CD4-positive, alpha-beta memory T cell (primary cell): ENCODE measurements at regions of chr19 and their contacts with region 1.

Region 1: GRCh38 chr19:44113138-44113783 is at the start of gene ZNF225:
- DNase-seq: peak; percentile 80 to 85 (median 84)
- H3K4me3 ChIP-seq: peak within 1 kb of the TSS; percentile 92 to 96
- H3K4me3 Mint-ChIP-seq: peak within 1 kb of the TSS; percentile 96 to 100 (median 99)
- H3K27ac ChIP-seq: peak within 1 kb of the TSS; percentile 30
- H3K27ac Mint-ChIP-seq: peak within 1 kb of the TSS; percentile 75 to 98 (median 94)
- H3K4me1 ChIP-seq: peaks cover 19% of the 10 kb centered on the region
- H3K4me1 Mint-ChIP-seq: peaks cover 9 to 40% (median 23%) of the 10 kb centered on the region in 4 donors
- H3K27me3 ChIP-seq: no peaks in the 10 kb centered on the region
- H3K27me3 Mint-ChIP-seq: no peaks in the 10 kb centered on the region
- total RNA-seq, gene ZNF225: 10.7 to 13.9 TPM

Region 2: DNA sequence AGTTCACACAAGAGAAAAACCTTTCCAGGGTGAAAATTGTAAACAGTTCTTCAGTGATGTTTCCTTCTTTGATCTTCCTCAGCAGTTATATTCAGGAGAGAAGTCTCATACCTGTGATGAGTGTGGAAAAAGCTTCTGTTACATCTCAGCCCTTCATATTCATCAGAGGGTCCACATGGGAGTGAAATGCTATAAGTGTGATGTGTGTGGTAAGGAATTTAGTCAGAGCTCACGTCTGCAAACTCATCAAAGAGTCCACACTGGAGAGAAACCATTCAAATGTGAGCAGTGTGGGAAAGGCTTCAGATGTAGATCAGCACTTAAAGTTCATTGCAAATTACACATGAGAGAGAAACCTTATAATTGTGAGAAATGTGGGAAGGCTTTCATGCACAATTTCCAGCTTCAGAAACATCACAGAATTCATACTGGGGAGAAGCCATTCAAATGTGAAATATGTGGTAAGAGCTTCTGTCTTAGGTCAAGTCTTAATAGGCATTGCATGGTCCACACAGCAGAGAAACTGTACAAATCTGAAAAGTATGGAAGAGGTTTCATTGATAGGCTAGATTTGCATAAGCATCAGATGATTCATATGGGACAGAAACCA is 81.2 kb before region 1 on chr19:
- CTCF ChIA-PET with region 1: no interaction called
- POLR2A ChIA-PET with region 1: no interaction called
- intact Hi-C with region 1: no loop called
- DNase-seq: no peak
- H3K4me3 ChIP-seq: no peak overlapping the region
- H3K4me3 Mint-ChIP-seq: no peak overlapping the region
- H3K27ac ChIP-seq: no peak overlapping the region
- H3K27ac Mint-ChIP-seq: no peak overlapping the region
- H3K4me1 ChIP-seq: no peaks in the 10 kb centered on the region
- H3K4me1 Mint-ChIP-seq: peaks cover 0 to 12% (median 4%) of the 10 kb centered on the region in 4 donors
- H3K27me3 ChIP-seq: no peaks in the 10 kb centered on the region
- H3K27me3 Mint-ChIP-seq: no peaks in the 10 kb centered on the region

Region 3: DNA sequence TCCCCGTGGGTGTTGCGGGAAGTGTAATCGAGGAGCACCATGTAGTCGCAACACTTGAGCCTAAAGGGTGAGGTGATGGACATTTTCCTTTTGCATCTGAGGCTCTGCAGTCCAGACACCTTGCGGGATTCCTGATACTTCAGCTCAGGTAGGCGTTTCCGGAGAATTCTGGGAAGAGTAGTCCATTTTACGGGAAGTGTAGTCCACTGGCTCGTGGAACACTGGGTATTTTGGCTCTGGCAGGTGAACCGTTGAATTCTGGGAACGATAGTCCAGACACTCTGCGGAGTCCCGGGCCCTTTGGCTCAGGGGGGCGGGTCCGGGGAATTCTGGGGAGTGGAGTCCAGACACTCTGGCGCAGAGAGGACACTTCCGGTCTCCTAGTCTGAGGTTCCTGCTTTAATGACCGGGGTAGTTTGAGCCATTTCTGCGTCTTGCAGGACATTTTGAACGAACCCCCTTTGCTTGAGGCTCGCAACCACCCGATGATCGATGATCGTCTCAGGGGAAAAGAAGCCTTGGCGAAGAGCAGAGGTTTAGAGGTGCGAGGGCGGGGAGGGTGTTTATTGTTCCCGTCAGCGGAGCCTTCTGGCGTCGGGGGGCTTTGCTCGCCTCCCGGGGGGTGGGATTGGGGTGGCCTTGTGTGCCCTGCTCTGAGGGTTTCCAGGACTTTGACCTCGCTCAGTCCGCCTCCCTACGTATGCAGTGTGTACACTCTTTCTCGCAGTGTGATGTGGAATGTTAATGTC is 61.4 kb before region 1 on chr19 and contains the start of gene ZNF223:
- CTCF ChIA-PET with region 1: no interaction called
- POLR2A ChIA-PET with region 1: interaction called, 4 read pairs
- intact Hi-C with region 1: loop called (anchors 1 kb)
- DNase-seq: peak; percentile 40 to 51 (median 45)
- H3K4me3 ChIP-seq: peak within 1 kb of the TSS; percentile 61 to 76
- H3K4me3 Mint-ChIP-seq: peak within 1 kb of the TSS; percentile 86 to 97 (median 94)
- H3K27ac ChIP-seq: no peak within 1 kb of the TSS
- H3K27ac Mint-ChIP-seq: peak within 1 kb of the TSS; percentile 27 to 88 (median 84)
- H3K4me1 ChIP-seq: peaks cover 8% of the 10 kb centered on the region
- H3K4me1 Mint-ChIP-seq: peaks cover 18 to 28% (median 26%) of the 10 kb centered on the region in 4 donors
- H3K27me3 ChIP-seq: no peaks in the 10 kb centered on the region
- H3K27me3 Mint-ChIP-seq: peaks cover 3 to 4% of the 10 kb centered on the region in 2 donors
- total RNA-seq, gene ZNF223: 6.8 to 8.0 TPM

Region 4: DNA sequence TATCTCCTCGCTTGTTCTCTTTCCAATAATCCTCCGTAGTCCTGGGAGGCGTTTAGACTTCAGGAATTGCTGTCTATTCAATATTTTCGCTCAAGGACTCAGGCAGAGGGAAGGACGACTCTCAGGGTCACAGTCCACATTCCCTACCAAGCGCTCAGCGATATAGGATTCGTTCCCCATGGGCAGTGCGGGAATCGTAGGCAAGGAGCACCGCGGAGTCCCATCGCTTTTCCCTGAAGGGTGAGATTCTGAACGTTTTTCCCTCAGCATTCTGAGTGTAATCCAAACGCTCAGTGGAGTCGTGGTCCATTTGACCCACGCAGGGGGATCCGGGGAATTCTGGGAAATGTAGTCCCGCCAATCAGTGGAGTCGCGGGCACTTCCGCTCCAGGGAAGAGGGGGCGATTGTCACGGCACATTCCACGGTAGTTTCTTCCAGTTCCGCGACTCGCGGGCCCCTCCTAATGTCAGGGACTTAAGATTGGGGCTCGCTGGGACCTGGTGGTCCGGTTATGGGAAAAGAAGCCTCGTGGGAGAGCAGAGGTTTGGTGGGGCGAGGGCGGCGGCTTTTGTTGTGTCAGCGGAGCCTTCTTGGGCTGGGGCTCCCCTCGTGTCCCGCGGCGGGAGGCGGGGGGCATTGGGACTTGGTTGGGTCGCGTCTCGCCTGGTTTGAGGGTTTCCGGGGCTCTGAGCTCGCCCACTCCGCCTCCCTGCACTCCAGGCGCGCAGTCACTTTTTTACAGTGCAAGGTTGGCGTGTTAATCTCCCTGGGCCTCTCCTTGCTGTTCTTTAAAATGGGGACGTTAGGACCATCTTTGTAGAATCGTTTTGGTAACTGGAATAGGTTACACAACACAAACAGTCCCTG is 28.2 kb after region 1 on chr19 and contains the start of gene ZNF234:
- CTCF ChIA-PET with region 1: no interaction called
- POLR2A ChIA-PET with region 1: no interaction called
- intact Hi-C with region 1: loop called (anchors 1 kb)
- DNase-seq: peak; percentile 58 to 65 (median 64)
- H3K4me3 ChIP-seq: peak within 1 kb of the TSS; percentile 90 to 97
- H3K4me3 Mint-ChIP-seq: peak within 1 kb of the TSS; percentile 91 to 98 (median 95)
- H3K27ac ChIP-seq: peak within 1 kb of the TSS; percentile 48
- H3K27ac Mint-ChIP-seq: peak within 1 kb of the TSS; percentile 35 to 90 (median 89)
- H3K4me1 ChIP-seq: peaks cover 15% of the 10 kb centered on the region
- H3K4me1 Mint-ChIP-seq: peaks cover 7 to 32% (median 22%) of the 10 kb centered on the region in 4 donors
- H3K27me3 ChIP-seq: no peaks in the 10 kb centered on the region
- H3K27me3 Mint-ChIP-seq: no peaks in the 10 kb centered on the region
- total RNA-seq, gene ZNF234: 23.9 to 28.9 TPM

Region 5: DNA sequence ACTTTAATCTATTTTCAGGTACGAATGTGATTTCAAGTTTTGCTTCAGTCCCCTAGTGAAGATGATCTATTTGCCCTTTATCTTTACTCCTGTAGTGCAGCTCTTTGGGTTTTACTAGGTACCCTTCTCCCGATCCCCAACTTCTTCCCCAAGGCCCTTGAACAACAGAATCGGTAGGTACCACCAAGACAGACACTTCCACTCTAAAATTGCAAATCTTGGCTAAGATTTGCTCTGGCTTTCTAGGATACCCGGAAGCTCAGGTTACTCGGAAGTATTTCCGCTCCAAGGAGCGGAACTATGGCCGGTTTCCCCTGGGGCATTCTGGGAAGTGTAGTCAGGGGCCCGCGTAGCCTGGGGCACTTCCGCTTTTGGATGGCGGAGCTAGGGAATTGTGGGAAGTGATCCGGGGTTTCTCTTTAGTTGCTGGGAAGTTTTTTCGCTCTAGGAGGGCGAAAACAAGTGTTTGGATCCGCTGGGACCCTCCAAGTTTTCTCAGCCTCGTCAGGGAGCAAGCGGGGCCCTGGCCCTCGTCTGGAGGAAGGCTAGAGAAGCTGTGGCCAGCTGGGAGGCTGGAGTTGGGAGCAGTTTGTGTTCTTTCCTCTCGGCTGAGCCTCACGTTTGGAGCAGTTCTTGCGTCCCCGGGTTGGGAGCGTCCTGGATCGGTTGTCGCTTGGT is 94.0 kb after region 1 on chr19:
- CTCF ChIA-PET with region 1: no interaction called
- POLR2A ChIA-PET with region 1: interaction called, 4 read pairs
- intact Hi-C with region 1: loop called (anchors 1 kb)
- DNase-seq: peak; percentile 61 to 77 (median 75)
- H3K4me3 ChIP-seq: peak overlapping the region; percentile 72 to 73
- H3K4me3 Mint-ChIP-seq: peak overlapping the region; percentile 89 to 95 (median 95)
- H3K27ac ChIP-seq: peak overlapping the region; percentile 60
- H3K27ac Mint-ChIP-seq: peak overlapping the region; percentile 61 to 95 (median 90)
- H3K4me1 ChIP-seq: peaks cover 5% of the 10 kb centered on the region
- H3K4me1 Mint-ChIP-seq: peaks cover 5 to 14% (median 10%) of the 10 kb centered on the region in 4 donors
- H3K27me3 ChIP-seq: no peaks in the 10 kb centered on the region
- H3K27me3 Mint-ChIP-seq: peaks cover 0 to 6% of the 10 kb centered on the region in 2 donors

Region 6: DNA sequence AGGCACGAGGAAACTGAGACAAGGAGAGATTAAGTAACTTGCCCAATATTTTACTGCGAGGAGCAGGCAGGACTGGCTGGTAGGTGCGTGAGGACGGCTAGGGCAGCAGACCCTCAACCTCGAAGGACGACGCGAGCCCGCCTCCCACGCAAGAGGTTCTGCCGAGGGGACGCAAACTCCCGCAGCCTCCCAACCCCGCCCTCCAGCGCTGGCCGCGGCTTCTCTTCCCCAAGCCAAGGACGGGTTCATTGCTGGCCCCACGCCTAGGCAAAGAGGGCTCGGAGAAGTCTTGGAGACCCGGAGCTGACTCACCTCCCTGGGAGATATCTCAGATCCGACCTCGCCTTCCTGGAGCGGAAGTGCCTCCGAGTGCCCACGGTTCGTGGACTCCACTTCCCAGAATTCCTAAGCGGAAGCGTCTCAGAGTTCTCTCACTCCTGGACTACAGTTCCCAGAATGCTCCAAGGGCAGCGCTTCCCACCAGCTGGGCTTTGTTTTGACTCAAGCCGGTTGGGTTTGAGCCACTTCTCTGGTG is 191.5 kb after region 1 on chr19 and contains the start of gene ZNF235:
- CTCF ChIA-PET with region 1: no interaction called
- POLR2A ChIA-PET with region 1: no interaction called
- intact Hi-C with region 1: loop called (anchors 1 kb)
- DNase-seq: peak; percentile 62 to 72 (median 66)
- H3K4me3 ChIP-seq: peak within 1 kb of the TSS; percentile 74 to 85
- H3K4me3 Mint-ChIP-seq: peak within 1 kb of the TSS; percentile 89 to 95 (median 93)
- H3K27ac ChIP-seq: peak within 1 kb of the TSS; percentile 48
- H3K27ac Mint-ChIP-seq: peak within 1 kb of the TSS; percentile 35 to 90 (median 77)
- H3K4me1 ChIP-seq: peaks cover 13% of the 10 kb centered on the region
- H3K4me1 Mint-ChIP-seq: peaks cover 8 to 25% (median 15%) of the 10 kb centered on the region in 4 donors
- H3K27me3 ChIP-seq: no peaks in the 10 kb centered on the region
- H3K27me3 Mint-ChIP-seq: peaks cover 2 to 5% of the 10 kb centered on the region in 2 donors
- total RNA-seq, gene ZNF235: 13.0 to 15.9 TPM